ENCODE measurements at regions of chr4 and their contacts with region 1.

Region 1: DNA sequence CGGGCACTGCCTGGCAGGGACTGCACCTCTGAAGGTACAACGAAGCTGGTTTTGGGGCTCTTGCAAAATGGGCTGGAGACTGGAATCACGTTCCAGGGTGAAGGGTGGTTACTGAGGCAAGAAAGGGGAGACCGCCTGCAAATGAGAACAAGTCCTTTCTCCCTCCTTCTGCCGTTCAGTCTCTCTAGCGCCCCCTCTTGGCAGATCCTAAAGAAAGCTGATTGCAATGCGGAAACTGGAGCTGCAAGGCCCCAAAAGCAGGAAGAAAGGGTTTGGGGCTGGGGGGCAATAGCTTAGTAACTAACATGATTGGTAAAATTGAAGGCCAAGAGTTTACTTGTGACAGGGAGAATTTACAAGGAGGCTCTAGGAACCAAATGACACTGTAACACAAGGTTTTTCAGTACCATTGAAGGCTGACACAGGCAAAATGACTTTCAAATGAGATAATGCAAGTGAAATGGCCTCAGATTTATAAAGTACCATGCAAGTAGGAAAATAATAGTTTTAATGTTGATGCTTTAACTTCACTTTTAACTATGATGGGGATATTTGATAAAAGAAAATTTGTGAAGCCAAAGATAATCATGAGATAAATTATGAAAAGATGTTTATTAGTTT is 222.7 kb upstream of the HAND2 start:
- DNase-seq: no peak
- ATAC-seq: no peak

Region 2: GRCh38 chr4:173505924-173506518 is 246.7 kb before region 1 on chr4:
- intact Hi-C with region 1: loop called (anchors 1 kb)
- DNase-seq: peak; percentile 81
- ATAC-seq: peak; percentile 73

Region 3: GRCh38 chr4:173642509-173642908 is 110.2 kb before region 1 on chr4:
- intact Hi-C with region 1: loop called (anchors 5 kb)
- DNase-seq: no peak
- ATAC-seq: peak; percentile 85

Region 4: DNA sequence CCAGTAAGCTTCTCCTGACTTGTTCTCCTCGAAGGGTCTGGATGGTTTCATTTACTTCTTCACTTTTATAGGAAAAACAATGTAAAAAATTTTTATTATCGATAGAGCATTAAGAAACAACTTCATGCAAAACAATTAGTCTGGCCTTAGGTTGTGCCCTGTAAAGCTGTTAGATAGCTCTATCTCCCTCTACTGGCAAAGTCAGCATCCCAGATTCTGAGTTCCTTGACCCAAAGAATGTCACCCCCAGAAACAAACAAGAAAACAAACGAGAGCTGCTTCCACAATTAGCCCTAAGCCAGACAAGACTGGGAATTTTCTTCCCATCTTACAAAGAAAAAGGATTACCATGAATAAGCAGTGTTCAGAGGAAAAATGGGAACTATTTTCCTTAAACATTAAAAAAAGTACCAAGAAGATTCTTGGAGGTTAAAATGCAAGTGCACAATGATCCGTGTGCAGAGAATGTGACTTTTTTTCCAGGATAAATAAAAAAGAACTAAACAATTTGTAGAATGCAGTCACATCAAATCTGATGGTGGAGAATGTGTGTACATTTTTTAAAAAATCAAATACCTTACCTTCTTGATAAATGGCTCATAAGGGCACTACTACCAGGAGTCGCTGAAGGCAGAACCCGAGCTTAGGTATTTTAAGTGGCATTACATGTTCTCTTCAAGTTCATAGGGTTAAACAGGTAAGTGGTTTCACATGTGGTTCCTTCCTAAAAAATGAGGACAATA is 237.6 kb after region 1 on chr4:
- intact Hi-C with region 1: loop called (anchors 10 kb)
- DNase-seq: no peak
- ATAC-seq: peak; percentile 81

Region 5: GRCh38 chr4:174141876-174142275 is 389.2 kb after region 1 on chr4:
- intact Hi-C with region 1: no loop called
- DNase-seq: no peak
- ATAC-seq: no peak

Region 6: DNA sequence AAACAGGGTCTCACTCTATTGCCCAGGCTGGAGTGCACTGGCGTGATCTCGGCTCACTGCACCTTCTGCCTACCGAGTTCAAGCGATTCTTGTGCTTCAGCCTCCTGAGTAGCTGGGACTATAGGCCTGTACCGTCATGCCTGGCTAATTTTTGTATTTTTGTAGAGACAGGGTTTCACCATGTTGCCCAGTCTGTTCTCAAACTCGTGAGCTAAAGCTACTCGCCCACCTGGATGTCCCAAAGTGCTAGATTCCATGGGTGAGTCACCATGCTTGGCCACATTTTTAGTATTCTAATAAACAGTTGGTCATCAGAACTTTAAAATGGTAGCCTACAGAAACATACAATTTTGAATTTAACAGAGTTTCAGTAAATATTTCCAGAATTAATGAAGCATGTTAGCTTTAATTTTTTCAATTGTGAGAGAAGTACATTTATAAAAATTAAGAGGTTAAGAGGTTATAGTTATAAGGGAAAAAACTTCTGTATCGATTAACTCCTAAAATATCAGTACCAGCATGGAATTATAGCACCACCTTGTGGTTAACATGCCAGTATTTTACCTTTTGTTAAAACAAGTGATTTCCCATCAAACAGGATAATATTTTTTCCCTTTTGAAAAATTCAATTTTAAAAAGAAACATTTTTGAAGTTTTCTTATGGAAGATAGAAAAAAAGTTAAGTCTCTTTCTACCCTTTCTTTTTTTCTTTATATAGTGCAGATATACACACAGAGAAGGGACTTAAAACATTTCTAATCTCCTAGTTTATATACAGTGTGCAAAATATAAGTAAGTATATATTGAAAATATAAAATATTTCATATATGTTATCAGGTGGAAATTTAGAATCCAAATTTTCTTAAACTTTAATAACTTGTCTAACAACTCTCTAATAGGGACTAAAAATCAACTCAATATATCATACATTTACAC is 566.4 kb after region 1 on chr4:
- intact Hi-C with region 1: loop called (anchors 10 kb)
- DNase-seq: no peak
- ATAC-seq: no peak

Measured in Right ventricle myocardium inferior (tissue), 1 donor.